ENCODE measurements at regions of chr15 and their contacts with region 1.

Region 1: GRCh38 chr15:83011271-83012075 is at the start of gene C15orf40:
- H3K4me3 ChIP-seq: peak within 1 kb of the TSS; percentile 97
- H3K27ac ChIP-seq: peak within 1 kb of the TSS; percentile 68
- H3K4me1 ChIP-seq: peaks cover 6% of the 10 kb centered on the region
- CTCF ChIP-seq: peak; percentile 97

Region 2: GRCh38 chr15:83061680-83062079 is 50.2 kb after region 1 on chr15:
- CTCF ChIA-PET with region 1: interaction called, 7 read pairs
- POLR2A ChIA-PET with region 1: interaction called, 17 read pairs
- H3K4me3 ChIP-seq: no peak overlapping the region
- H3K27ac ChIP-seq: peak overlapping the region; percentile 45; the same call in 1 of the 2 replicates
- H3K4me1 ChIP-seq: peaks cover 40% of the 10 kb centered on the region
- CTCF ChIP-seq: no peak

Region 3: GRCh38 chr15:83066734-83067637 is 55.5 kb after region 1 on chr15 and contains the start of gene BTBD1:
- CTCF ChIA-PET with region 1: interaction called, 7 read pairs
- POLR2A ChIA-PET with region 1: interaction called, 17 read pairs
- H3K4me3 ChIP-seq: peak within 1 kb of the TSS; percentile 91
- H3K27ac ChIP-seq: peak within 1 kb of the TSS; percentile 96
- H3K4me1 ChIP-seq: peaks cover 30% of the 10 kb centered on the region
- CTCF ChIP-seq: peak; percentile 52; the same call in 1 of the 2 replicates